Caco-2 (cell line): ENCODE measurements at regions of chr12 and their contacts with region 1.

Region 1: DNA sequence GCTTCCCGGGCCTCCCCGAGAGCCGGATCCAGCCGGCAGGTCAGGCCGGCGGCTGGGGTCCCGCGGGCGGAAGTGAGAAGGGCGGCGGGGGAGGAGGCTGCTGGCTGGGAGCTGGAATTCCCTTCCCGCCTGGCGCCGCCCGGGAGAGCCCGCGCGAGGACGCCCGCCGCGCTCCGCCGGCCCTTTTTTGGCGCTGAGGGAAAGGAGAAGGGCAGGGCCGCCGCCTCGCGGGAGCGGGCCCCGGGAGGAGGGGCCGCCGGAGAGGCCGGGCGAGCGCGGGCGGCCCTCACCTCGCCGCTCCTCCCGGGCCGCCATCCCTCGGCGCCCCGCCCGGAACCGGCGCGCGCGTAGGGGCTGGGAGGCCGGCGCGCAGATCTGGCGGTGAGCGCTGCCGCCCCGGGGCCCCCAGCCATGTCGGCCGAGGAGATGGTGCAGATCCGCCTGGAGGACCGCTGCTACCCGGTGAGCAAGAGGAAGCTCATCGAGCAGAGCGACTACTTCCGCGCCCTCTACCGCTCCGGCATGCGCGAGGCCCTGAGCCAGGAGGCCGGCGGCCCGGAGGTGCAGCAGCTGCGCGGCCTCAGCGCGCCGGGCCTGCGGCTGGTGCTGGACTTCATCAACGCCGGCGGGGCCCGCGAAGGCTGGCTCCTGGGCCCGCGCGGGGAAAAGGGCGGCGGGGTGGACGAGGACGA is at the starts of genes KLHL42 and MANSC4:
- DNase-seq: peak; percentile 78 to 87
- H3K4me3 ChIP-seq: peak within 1 kb of the TSS; percentile 95
- H3K4me3 Mint-ChIP-seq: peak within 1 kb of the TSS; percentile 83
- H3K27ac Mint-ChIP-seq: peak within 1 kb of the TSS; percentile 86
- H3K4me1 ChIP-seq: 0 out of 2 replicates have a peak, but pooled peaks cover 3% of the 10 kb centered on the region
- H3K4me1 Mint-ChIP-seq: peaks cover 26% of the 10 kb centered on the region
- H3K27me3 ChIP-seq: no peaks in the 10 kb centered on the region
- H3K27me3 Mint-ChIP-seq: no peaks in the 10 kb centered on the region
- CTCF ChIP-seq: no peak
- total RNA-seq, gene KLHL42: 36.5 and 38.1 TPM in 2 replicates
- total RNA-seq, gene MANSC4: not detected in 2 replicates

Region 2: GRCh38 chr12:27723212-27723611 is 56.9 kb before region 1 on chr12:
- CTCF ChIA-PET with region 1: no interaction called
- POLR2A ChIA-PET with region 1: no interaction called
- intact Hi-C with region 1: no loop called
- DNase-seq: no peak
- H3K4me3 ChIP-seq: no peak overlapping the region
- H3K4me3 Mint-ChIP-seq: no peak overlapping the region
- H3K27ac Mint-ChIP-seq: no peak overlapping the region
- H3K4me1 ChIP-seq: no peaks in the 10 kb centered on the region
- H3K4me1 Mint-ChIP-seq: no peaks in the 10 kb centered on the region
- H3K27me3 ChIP-seq: no peaks in the 10 kb centered on the region
- H3K27me3 Mint-ChIP-seq: no peaks in the 10 kb centered on the region
- CTCF ChIP-seq: no peak

Region 3: DNA sequence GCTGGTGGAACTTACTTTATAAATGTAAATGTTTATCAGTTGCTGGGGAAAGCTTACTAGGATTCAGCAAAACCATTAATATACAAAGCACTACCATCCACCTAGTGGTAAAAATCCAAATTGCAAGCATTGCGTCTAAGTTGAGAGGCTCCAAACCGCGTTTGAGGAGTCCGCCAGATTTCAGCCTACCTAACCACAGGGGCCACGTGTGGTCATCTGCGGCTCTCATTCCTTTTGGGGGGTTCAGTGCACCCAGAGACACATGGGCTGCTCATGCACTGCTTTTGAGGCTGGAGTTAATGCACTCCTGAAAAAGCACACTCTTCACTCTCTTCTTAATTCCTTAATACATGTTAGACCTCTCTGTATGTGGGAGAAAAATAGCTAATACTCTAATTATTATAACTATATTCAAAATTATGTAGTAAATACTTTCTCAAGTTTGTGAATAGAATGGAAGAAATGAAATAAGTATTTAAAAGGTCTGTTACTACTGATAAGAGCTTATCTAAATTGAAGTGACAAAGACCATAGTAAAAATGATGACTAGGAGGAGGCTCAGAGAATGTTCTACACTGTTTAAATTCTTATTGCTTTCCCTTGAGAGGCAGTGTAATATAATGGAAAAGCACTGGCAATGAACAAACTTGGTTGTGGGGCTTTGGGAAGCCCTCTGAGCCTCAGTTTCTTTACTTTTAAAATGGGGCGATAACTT is 41.4 kb after region 1 on chr12:
- CTCF ChIA-PET with region 1: interaction called, 9 read pairs
- POLR2A ChIA-PET with region 1: interaction called, 3 read pairs
- intact Hi-C with region 1: loop called (anchors 2 kb)
- DNase-seq: peak in 1 of 2 experiments; percentile 82
- H3K4me3 ChIP-seq: no peak overlapping the region
- H3K4me3 Mint-ChIP-seq: no peak overlapping the region
- H3K27ac Mint-ChIP-seq: no peak overlapping the region
- H3K4me1 ChIP-seq: no peaks in the 10 kb centered on the region; the same call in none of the 2 replicates
- H3K4me1 Mint-ChIP-seq: peaks cover 4% of the 10 kb centered on the region
- H3K27me3 ChIP-seq: no peaks in the 10 kb centered on the region
- H3K27me3 Mint-ChIP-seq: no peaks in the 10 kb centered on the region
- CTCF ChIP-seq: peak; percentile 74 to 89